Activated naive CD8-positive, alpha-beta T cell treated with anti-CD3 and anti-CD28 coated beads, Interleukin-2, amount 10 ng/mL, durations not matched to agents 7 days and 5 days (primary cell): ENCODE measurements at regions of chr7 and their contacts with region 1.

Region 1: DNA sequence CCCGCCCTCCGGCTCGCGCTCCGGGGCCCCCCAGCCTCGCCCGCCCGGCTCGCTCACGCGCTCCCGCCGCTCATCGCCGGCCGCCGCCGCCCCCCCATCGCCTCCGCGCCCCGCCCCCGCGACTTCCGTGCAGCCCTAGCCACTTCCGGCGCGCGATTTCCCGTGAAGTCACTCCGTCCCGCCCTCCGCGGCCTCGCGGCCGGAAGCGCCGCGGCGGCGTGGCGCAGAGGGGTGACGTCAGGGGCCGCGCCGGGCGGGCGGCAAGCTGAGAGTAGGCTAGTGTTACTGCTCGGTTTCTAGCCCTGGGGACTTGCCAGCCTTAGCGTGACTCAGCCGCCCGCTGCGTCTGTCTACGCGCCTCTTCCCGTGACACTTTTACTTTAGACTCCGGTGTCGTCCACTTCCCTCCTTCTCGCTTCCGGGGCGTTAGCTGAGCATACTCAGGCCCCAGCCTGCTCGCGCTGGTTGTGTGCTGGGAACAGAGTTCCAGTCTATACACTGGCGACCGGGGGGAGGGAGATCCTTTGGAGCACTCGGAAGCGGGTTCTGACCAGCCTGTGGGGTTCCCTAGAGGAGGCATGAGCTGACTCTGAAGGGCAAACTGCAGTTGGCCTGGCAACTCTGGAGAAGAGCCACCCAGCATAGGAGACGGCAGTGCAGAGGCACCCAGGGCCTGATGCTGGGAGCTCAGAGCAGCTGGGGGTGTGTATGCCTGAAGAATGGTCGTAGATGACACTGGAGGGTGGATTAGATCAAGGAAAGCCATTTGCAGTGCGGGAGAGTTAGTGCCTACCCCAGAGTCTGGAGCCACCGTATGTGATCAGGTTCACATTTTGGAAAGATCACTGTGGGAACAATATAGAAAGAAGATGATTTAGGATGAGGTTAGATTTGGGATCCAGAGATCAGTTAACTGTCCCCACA is at the start of gene PURB:
- DNase-seq: peak; percentile 99
- ATAC-seq: peak; percentile 92
- H3K4me3 Mint-ChIP-seq: peak within 1 kb of the TSS; percentile 91
- H3K27ac Mint-ChIP-seq: peak within 1 kb of the TSS; percentile 97
- H3K4me1 Mint-ChIP-seq: peaks cover 51% of the 10 kb centered on the region
- H3K27me3 Mint-ChIP-seq: no peaks in the 10 kb centered on the region
- total RNA-seq, gene PURB: 34.8 to 35.6 TPM

Region 2: DNA sequence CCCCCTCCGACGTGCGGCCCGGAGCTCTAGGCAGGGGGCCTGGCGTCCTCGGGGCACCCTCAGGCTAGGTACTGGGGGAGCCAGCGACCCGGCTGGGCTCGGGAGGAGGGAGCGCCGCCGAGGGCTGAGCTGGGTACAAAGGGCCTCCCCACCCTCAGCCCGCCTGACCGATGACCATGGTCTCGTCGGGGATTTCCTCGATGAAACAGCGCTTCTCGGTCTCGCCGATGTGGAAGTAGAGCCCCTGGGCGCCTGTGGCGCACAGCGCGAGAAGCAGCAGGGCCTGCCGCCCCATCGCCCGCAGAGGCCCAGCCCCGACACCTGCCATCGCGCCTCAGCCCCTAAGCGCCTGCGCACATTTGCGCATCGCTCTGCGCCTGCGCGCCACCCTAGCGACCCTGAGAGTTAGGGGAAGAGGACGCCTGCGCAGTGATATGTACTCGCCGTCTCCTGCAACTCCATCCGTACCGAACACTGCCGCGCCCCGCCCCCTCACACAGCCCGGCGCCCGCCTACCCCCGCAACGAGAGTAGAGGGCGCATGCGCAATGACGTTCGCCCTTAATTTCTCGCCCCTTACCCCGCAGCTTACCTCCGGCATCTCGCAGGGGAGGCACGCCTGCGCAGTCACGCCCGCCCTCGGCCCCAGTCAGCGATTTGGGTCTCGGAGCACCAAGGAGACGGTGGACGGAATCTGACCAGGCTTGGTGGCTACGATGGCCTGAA is 303.6 kb before region 1 on chr7 and contains the start of gene TMED4:
- POLR2A ChIA-PET with region 1: interaction called, 21 read pairs
- DNase-seq: peak; percentile 100
- ATAC-seq: peak; percentile 93
- H3K4me3 Mint-ChIP-seq: peak within 1 kb of the TSS; percentile 93
- H3K27ac Mint-ChIP-seq: peak within 1 kb of the TSS; percentile 95
- H3K4me1 Mint-ChIP-seq: peaks cover 22% of the 10 kb centered on the region
- H3K27me3 Mint-ChIP-seq: peaks cover 7% of the 10 kb centered on the region
- total RNA-seq, gene TMED4: 91.4 to 94.3 TPM

Region 3: GRCh38 chr7:44797329-44798251 is 88.1 kb before region 1 on chr7:
- POLR2A ChIA-PET with region 1: interaction called, 16 read pairs
- DNase-seq: peak; percentile 83
- ATAC-seq: peak; percentile 49
- H3K4me3 Mint-ChIP-seq: peak overlapping the region; percentile 98
- H3K27ac Mint-ChIP-seq: peak overlapping the region; percentile 96
- H3K4me1 Mint-ChIP-seq: peaks cover 27% of the 10 kb centered on the region
- H3K27me3 Mint-ChIP-seq: no peaks in the 10 kb centered on the region

Region 4: DNA sequence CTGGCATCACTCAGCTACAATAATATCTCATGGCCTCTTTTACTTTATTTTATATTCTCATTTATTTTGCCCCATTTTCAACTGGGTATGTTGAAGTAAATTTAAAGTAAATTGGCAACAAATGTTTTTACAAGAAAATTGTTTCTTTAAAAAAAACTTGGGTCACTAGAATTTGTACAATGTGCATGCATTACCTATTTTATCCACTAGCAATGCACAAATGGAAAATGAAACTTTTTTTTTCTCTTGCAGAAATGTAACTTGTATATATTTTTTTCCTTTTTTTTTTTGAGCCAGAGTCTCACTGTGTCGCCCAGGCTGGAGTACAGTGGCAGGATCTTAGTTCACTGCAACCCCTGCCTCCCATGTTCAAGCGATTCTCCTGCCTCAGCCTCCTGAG is 27.5 kb before region 1 on chr7:
- POLR2A ChIA-PET with region 1: interaction called, 56 read pairs
- DNase-seq: no peak
- ATAC-seq: no peak
- H3K4me3 Mint-ChIP-seq: no peak overlapping the region
- H3K27ac Mint-ChIP-seq: no peak overlapping the region
- H3K4me1 Mint-ChIP-seq: peaks cover 12% of the 10 kb centered on the region
- H3K27me3 Mint-ChIP-seq: peaks cover 13% of the 10 kb centered on the region

Region 5: GRCh38 chr7:44921607-44922359 is 36.1 kb after region 1 on chr7:
- POLR2A ChIA-PET with region 1: interaction called, 54 read pairs
- DNase-seq: peak; percentile 97
- ATAC-seq: peak; percentile 99
- H3K4me3 Mint-ChIP-seq: no peak overlapping the region
- H3K27ac Mint-ChIP-seq: peak overlapping the region; percentile 72
- H3K4me1 Mint-ChIP-seq: peaks cover 24% of the 10 kb centered on the region
- H3K27me3 Mint-ChIP-seq: peaks cover 8% of the 10 kb centered on the region

Region 6: DNA sequence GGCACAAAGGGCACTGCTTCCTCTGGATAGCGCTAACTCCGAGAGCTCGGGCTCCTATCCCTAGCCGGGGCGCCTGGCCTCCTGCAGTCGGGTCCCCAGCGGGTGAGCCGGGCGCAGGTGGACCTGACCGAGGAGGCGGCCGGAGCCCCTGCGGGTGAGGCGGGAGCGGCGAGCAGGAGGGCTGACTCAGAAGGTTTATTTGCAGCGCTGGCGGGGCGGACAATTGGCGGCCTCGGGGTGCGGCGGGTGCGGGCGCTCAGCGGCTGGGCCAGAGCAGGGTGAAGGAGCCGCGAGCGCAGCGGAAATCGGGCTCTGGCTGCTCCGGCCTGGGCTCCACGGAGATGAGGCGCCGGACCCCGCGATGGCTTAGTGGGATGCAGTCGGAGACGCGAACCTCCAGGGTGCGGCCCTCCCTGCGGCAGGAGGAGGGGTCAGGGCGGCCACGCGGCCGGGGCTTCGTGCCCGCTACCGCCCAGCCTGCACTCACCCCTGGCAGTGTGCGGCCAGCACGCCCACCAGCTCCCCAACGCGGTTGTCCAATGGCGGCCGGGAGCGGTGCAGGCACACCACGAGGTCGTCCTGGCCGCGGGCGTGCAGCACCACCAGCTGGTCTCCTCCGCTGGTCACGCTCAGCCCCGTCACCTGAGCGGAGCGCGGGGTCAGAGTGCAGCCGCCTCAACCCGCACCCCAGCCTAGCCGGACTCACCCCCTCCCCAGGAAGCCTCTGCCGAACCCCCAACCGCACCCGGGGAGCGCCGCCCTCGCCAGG is 77.0 kb after region 1 on chr7:
- POLR2A ChIA-PET with region 1: no interaction called
- DNase-seq: peak; percentile 35
- ATAC-seq: no peak
- H3K4me3 Mint-ChIP-seq: no peak overlapping the region
- H3K27ac Mint-ChIP-seq: no peak overlapping the region
- H3K4me1 Mint-ChIP-seq: peaks cover 22% of the 10 kb centered on the region
- H3K27me3 Mint-ChIP-seq: no peaks in the 10 kb centered on the region